ENCODE measurements at regions of chr12 and their contacts with region 1.

Region 1: GRCh38 chr12:20798561-20798960 is 11.9 kb upstream of the SLCO1B3 start:
- DNase-seq: peak in 1 of 2 experiments; percentile 37
- H3K4me3 ChIP-seq: no peak overlapping the region
- H3K4me3 Mint-ChIP-seq: no peak overlapping the region
- H3K27ac Mint-ChIP-seq: no peak overlapping the region
- H3K4me1 ChIP-seq: no peaks in the 10 kb centered on the region
- H3K4me1 Mint-ChIP-seq: no peaks in the 10 kb centered on the region
- H3K27me3 ChIP-seq: no peaks in the 10 kb centered on the region
- H3K27me3 Mint-ChIP-seq: no peaks in the 10 kb centered on the region
- CTCF ChIP-seq: peak; percentile 56

Region 2: DNA sequence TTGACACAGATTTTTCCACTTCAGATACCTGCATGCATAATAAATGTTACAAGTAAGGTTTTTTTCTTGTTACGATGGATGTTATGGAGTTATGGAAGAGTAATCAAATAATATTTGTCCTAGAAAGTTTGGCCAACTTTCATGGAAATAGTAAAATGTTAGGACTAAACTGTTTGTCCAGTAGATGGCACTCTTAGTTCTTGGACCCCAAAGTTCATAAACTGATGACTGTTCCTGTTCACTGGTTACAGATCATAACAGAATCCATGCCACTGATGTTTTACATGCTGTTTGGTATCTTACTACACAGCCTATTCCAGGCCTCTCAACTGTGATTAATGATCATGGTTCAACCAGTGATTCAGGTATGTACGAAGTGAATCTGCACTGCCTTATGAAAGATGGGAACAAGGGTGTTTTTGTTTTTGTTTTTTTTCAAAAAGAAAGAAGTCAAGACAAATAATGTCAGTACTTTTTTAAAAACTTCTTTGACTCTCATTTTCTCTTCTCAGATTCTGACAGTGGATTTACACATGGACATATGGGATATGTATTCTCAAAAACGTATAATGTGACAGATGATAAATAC is 152.2 kb before region 1 on chr12:
- CTCF ChIA-PET with region 1: no interaction called
- POLR2A ChIA-PET with region 1: no interaction called
- intact Hi-C with region 1: loop called (anchors 1 kb)
- DNase-seq: peak in 1 of 2 experiments; percentile 36
- H3K4me3 ChIP-seq: no peak overlapping the region
- H3K4me3 Mint-ChIP-seq: no peak overlapping the region
- H3K27ac Mint-ChIP-seq: no peak overlapping the region
- H3K4me1 ChIP-seq: no peaks in the 10 kb centered on the region
- H3K4me1 Mint-ChIP-seq: no peaks in the 10 kb centered on the region
- H3K27me3 ChIP-seq: no peaks in the 10 kb centered on the region
- H3K27me3 Mint-ChIP-seq: no peaks in the 10 kb centered on the region
- CTCF ChIP-seq: peak; percentile 63 to 65

Region 3: GRCh38 chr12:20681334-20681733 is 117.2 kb before region 1 on chr12:
- CTCF ChIA-PET with region 1: no interaction called
- POLR2A ChIA-PET with region 1: no interaction called
- intact Hi-C with region 1: loop called (anchors 1 kb)
- DNase-seq: no peak
- H3K4me3 ChIP-seq: no peak overlapping the region
- H3K4me3 Mint-ChIP-seq: no peak overlapping the region
- H3K27ac Mint-ChIP-seq: no peak overlapping the region
- H3K4me1 ChIP-seq: no peaks in the 10 kb centered on the region
- H3K4me1 Mint-ChIP-seq: no peaks in the 10 kb centered on the region
- H3K27me3 ChIP-seq: no peaks in the 10 kb centered on the region
- H3K27me3 Mint-ChIP-seq: peaks cover 2% of the 10 kb centered on the region
- CTCF ChIP-seq: no peak

Region 4: GRCh38 chr12:20716037-20716436 is 82.5 kb before region 1 on chr12:
- CTCF ChIA-PET with region 1: no interaction called
- POLR2A ChIA-PET with region 1: no interaction called
- intact Hi-C with region 1: loop called (anchors 2 kb)
- DNase-seq: peak; percentile 41 to 44
- H3K4me3 ChIP-seq: no peak overlapping the region
- H3K4me3 Mint-ChIP-seq: no peak overlapping the region
- H3K27ac Mint-ChIP-seq: no peak overlapping the region
- H3K4me1 ChIP-seq: no peaks in the 10 kb centered on the region
- H3K4me1 Mint-ChIP-seq: no peaks in the 10 kb centered on the region
- H3K27me3 ChIP-seq: no peaks in the 10 kb centered on the region
- H3K27me3 Mint-ChIP-seq: peaks cover 3% of the 10 kb centered on the region
- CTCF ChIP-seq: peak; percentile 21 to 57

Region 5: GRCh38 chr12:20731274-20731673 is 67.3 kb before region 1 on chr12:
- CTCF ChIA-PET with region 1: no interaction called
- POLR2A ChIA-PET with region 1: no interaction called
- intact Hi-C with region 1: loop called (anchors 1 kb)
- DNase-seq: no peak
- H3K4me3 ChIP-seq: no peak overlapping the region
- H3K4me3 Mint-ChIP-seq: no peak overlapping the region
- H3K27ac Mint-ChIP-seq: no peak overlapping the region
- H3K4me1 ChIP-seq: 0 out of 2 replicates have a peak, but pooled peaks cover 3% of the 10 kb centered on the region
- H3K4me1 Mint-ChIP-seq: no peaks in the 10 kb centered on the region
- H3K27me3 ChIP-seq: no peaks in the 10 kb centered on the region
- H3K27me3 Mint-ChIP-seq: peaks cover 2% of the 10 kb centered on the region
- CTCF ChIP-seq: no peak

Measured in Caco-2 (cell line).